A549 (cell line): ENCODE measurements at regions of chr5 and their contacts with region 1.

Region 1: DNA sequence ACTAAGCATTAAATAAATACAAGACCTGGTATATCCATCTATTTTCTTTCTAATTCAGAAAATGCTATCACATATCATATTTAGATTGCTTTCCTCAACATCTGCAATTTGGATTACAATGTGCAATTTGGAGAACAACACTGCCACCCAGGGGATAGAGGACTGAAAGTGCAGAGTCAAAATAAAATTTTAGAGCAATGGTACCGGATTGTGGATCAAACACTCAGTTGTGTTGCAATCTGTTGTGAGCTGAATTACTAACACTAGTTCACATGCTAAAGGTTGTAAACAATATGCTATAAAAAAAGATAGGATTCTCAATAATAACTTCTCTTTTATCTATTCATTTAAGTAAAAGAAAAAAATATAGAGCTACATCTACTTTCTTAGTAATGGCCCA is 11.9 kb upstream of the SRFBP1 start:
- DNase-seq: peak; percentile 37 to 49
- ATAC-seq: peak; percentile 62 to 73; a peak in 4 of 6 replicates
- H3K4me3 ChIP-seq: no peak overlapping the region
- H3K27ac ChIP-seq: no peak overlapping the region
- H3K4me1 ChIP-seq: no peaks in the 10 kb centered on the region
- CTCF ChIP-seq: peak; percentile 81
- EP300 ChIP-seq: no peak
- POLR2A ChIP-seq: no peak
- RAD21 ChIP-seq: peak; percentile 77 to 85

Region 2: GRCh38 chr5:120655828-120656435 is 1293.9 kb before region 1 on chr5:
- CTCF ChIA-PET with region 1: interaction called, 12 read pairs
- POLR2A ChIA-PET with region 1: no interaction called
- DNase-seq: peak; percentile 2 to 33
- ATAC-seq: peak; percentile 83
- H3K4me3 ChIP-seq: no peak overlapping the region
- H3K27ac ChIP-seq: no peak overlapping the region
- H3K4me1 ChIP-seq: no peaks in the 10 kb centered on the region
- CTCF ChIP-seq: peak; percentile 67
- EP300 ChIP-seq: no peak
- POLR2A ChIP-seq: no peak
- RAD21 ChIP-seq: peak; percentile 66 to 69

Region 3: DNA sequence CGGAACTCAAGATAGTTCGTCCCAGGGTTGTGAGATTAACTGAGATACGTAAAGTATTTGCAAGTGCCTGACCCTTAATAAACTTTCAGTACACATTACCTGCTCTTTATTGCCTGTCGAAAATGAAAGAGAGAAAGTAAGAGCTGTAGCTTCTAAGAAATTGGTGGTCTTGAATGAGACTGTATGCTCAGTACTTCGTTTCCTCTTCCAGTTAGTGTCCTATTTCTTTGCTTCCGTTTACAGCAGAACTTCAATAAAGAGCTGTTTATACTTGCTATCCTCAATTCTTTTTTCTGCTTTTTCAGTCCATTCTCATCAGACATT is 12.4 kb after region 1 on chr5:
- CTCF ChIA-PET with region 1: interaction called, 43 read pairs
- POLR2A ChIA-PET with region 1: interaction called, 7 read pairs
- DNase-seq: peak in 1 of 2 experiments; percentile 4
- ATAC-seq: peak in 1 of 2 experiments; percentile 3; a peak in 1 of 6 replicates
- H3K4me3 ChIP-seq: peak overlapping the region; percentile 93
- H3K27ac ChIP-seq: peak overlapping the region; percentile 76 to 89
- H3K4me1 ChIP-seq: peaks cover 8% of the 10 kb centered on the region
- CTCF ChIP-seq: no peak
- EP300 ChIP-seq: no peak
- POLR2A ChIP-seq: no peak
- RAD21 ChIP-seq: no peak